Activated CD4-positive, alpha-beta T cell treated with anti-CD3 and anti-CD28 coated beads, Interleukin-2, amount 10 ng/mL, durations not matched to agents 24 days and 14 days (primary cell): ENCODE measurements at regions of chr11 and their contacts with region 1.

Region 1: DNA sequence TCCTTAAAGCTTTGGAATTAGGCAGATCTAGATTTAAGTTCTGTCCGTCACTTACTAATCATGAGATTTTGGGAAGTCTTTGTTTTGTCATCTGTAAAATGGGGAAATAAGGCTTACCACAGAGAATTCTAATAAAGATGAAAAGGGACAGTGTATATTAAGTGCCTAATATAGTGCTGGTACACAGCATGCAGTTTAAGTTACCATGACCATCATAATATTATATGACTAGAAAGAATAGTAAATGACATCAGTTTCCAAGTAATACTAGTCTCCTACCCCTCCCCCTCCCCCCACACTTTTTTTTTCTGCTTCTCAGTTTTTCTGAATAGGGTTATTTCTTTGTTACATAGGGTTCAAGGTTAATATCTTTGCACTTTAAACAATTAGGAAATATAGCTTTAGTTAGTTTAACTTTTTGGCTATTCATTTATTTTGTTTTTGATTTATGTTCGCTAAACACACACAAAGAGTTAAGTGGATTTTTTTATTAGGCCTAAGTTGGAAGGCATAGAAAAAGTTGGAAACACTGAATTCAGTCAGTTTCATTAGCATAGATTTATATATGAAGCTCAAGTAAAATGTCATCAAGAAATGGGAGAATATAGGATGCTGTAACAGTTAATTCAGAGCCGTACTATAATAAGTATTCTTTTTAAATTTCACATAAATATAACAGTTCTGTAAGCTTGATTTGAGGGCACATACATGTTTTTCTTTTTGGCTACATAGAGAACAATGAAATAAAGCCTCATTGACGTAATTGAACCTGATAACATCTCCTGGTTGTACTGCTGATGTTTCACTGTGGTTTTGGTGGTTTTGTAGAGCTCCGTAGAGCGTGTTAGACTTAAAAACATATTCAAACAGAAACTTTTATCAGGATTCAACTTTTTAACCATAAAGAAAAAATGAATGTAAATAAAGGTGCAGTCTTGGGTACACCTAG is 121.2 kb downstream of the PDE3B start:
- DNase-seq: peak; percentile 90
- H3K4me3 Mint-ChIP-seq: no peak overlapping the region
- H3K27ac Mint-ChIP-seq: no peak overlapping the region
- H3K4me1 Mint-ChIP-seq: peaks cover 32% of the 10 kb centered on the region
- H3K27me3 Mint-ChIP-seq: no peaks in the 10 kb centered on the region

Region 2: GRCh38 chr11:14336507-14337503 is 428.0 kb before region 1 on chr11:
- intact Hi-C with region 1: loop called (anchors 10 kb)
- DNase-seq: peak; percentile 65
- H3K4me3 Mint-ChIP-seq: peak overlapping the region; percentile 5
- H3K27ac Mint-ChIP-seq: peak overlapping the region; percentile 77
- H3K4me1 Mint-ChIP-seq: peaks cover 51% of the 10 kb centered on the region
- H3K27me3 Mint-ChIP-seq: no peaks in the 10 kb centered on the region

Region 3: GRCh38 chr11:14544611-14545010 is 220.2 kb before region 1 on chr11:
- intact Hi-C with region 1: loop called (anchors 1 kb)
- DNase-seq: peak; percentile 65
- H3K4me3 Mint-ChIP-seq: peak overlapping the region; percentile 61
- H3K27ac Mint-ChIP-seq: peak overlapping the region; percentile 94
- H3K4me1 Mint-ChIP-seq: peaks cover 49% of the 10 kb centered on the region
- H3K27me3 Mint-ChIP-seq: no peaks in the 10 kb centered on the region

Region 4: GRCh38 chr11:14643697-14644225 is 121.1 kb before region 1 on chr11 and contains the start of gene PDE3B:
- intact Hi-C with region 1: loop called (anchors 1 kb)
- DNase-seq: peak; percentile 93
- H3K4me3 Mint-ChIP-seq: peak within 1 kb of the TSS; percentile 83
- H3K27ac Mint-ChIP-seq: peak within 1 kb of the TSS; percentile 94
- H3K4me1 Mint-ChIP-seq: peaks cover 31% of the 10 kb centered on the region
- H3K27me3 Mint-ChIP-seq: no peaks in the 10 kb centered on the region
- total RNA-seq, gene PDE3B: 49.3 and 52.8 TPM in 2 replicates

Region 5: DNA sequence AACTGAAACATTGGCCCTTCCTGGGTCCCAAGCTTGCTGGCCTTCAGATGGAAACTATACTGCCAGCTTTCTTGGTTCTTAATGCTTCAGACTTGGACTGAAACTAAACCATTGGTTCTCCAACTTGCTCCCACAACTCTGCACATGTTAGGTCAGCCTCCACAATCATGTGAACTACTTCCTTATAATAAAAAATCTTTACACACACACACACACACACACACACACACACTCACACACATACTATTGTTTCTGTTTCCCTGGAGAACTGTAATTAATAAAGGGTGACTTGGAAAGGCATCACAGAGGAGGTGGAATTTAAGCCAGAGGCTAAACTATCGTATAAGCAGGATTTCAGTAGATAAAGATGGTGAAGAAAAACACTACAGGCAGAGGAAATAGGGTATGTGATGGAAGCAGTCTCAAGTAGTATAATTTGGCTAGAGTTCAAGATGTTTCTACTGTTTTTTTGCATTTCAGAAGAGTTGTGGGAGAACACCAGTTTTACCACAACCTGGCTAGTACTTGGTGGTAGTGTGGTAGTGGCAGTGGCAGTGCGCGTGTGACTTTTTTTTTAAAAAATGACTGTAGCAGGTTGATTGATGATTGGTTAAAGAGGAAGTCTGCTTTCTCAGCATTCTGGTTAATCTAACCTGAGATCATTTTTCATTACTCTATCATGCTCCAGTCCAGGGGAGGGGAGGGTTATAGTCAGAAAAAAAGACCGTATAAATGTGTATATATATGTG is 51.2 kb before region 1 on chr11:
- intact Hi-C with region 1: loop called (anchors 5 kb)
- DNase-seq: peak; percentile 72
- H3K4me3 Mint-ChIP-seq: peak overlapping the region; percentile 10
- H3K27ac Mint-ChIP-seq: peak overlapping the region; percentile 76
- H3K4me1 Mint-ChIP-seq: peaks cover 31% of the 10 kb centered on the region
- H3K27me3 Mint-ChIP-seq: no peaks in the 10 kb centered on the region

Region 6: DNA sequence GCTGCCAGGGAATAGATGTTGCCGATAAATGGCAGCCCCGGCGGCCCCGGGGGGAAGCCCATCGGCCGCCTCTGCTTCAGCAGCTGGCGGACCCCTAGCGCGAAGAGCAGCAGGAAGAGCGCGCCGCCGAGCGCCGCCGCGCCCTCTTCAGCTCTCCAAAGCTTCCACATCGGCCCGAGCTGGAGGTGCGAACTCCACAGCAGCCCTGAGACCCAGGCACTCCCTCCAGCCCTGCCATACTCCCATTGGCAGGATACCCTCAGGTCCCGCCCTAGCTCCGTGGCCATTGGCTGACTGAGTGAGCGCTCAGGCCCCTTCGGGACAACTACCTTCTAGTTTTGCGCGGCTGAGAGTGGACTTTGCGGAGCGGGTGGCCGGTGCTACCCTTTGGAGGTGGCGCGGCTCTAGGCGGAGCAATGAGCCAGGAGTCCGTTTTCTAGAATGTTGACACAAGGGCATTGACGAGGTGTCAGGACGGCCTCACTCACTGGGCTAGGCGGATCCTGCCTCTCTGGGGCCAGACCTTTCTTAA is 127.2 kb after region 1 on chr11 and contains the start of gene CYP2R1:
- intact Hi-C with region 1: loop called (anchors 1 kb)
- DNase-seq: peak; percentile 98
- H3K4me3 Mint-ChIP-seq: peak within 1 kb of the TSS; percentile 93
- H3K27ac Mint-ChIP-seq: peak within 1 kb of the TSS; percentile 99
- H3K4me1 Mint-ChIP-seq: peaks cover 53% of the 10 kb centered on the region
- H3K27me3 Mint-ChIP-seq: no peaks in the 10 kb centered on the region
- total RNA-seq, gene CYP2R1: 13.1 and 13.7 TPM in 2 replicates

Region 7: DNA sequence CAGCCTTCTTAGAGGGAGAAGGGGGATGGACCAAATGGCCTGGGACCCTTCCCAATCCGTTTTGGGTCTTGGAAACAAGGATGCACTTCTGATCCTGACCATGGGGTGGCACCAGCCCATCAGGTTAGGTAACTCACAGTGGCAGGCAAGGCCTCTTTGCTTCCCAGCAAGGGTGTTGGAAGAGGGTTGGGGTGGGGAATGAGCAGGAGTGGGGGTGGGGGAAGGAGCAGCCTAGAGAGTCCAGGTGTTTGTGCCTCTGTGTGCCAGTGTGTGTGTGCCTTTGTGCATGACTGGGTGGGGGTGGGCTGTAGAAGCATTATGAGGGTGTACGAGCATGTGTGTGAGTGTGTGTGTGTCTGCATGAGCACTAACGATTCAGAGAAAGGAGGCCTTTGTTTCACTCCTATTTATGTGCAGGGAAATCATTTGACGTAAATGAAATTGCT is 563.0 kb after region 1 on chr11:
- intact Hi-C with region 1: no loop called
- DNase-seq: peak; percentile 61
- H3K4me3 Mint-ChIP-seq: no peak overlapping the region
- H3K27ac Mint-ChIP-seq: no peak overlapping the region
- H3K4me1 Mint-ChIP-seq: no peaks in the 10 kb centered on the region
- H3K27me3 Mint-ChIP-seq: no peaks in the 10 kb centered on the region